OCI-LY7 (cell line): ENCODE measurements at regions of chr15 and their contacts with region 1.

Region 1: GRCh38 chr15:65304389-65305144 is at the start of gene RNU5B-1:
- DNase-seq: peak; percentile 96
- H3K4me3 ChIP-seq: peak within 1 kb of the TSS; percentile 69
- H3K27ac ChIP-seq: peak within 1 kb of the TSS; percentile 91
- H3K4me1 ChIP-seq: peaks cover 24% of the 10 kb centered on the region
- CTCF ChIP-seq: peak; percentile 99
- total RNA-seq, gene RNU5B-1: not detected in 2 replicates

Region 2: GRCh38 chr15:65133548-65134200 is 170.9 kb before region 1 on chr15 and contains the start of gene PDCD7:
- CTCF ChIA-PET with region 1: no interaction called
- POLR2A ChIA-PET with region 1: interaction called, 3 read pairs
- intact Hi-C with region 1: loop called (anchors 1 kb)
- DNase-seq: peak; percentile 95
- H3K4me3 ChIP-seq: peak within 1 kb of the TSS; percentile 87
- H3K27ac ChIP-seq: peak within 1 kb of the TSS; percentile 64
- H3K4me1 ChIP-seq: peaks cover 13% of the 10 kb centered on the region
- CTCF ChIP-seq: no peak
- total RNA-seq, gene PDCD7: 27.2 and 34.6 TPM in 2 replicates

Region 3: GRCh38 chr15:65184868-65185738 is 119.5 kb before region 1 on chr15 and contains the start of gene CLPX:
- CTCF ChIA-PET with region 1: no interaction called
- POLR2A ChIA-PET with region 1: interaction called, 7 read pairs
- intact Hi-C with region 1: loop called (anchors 1 kb)
- DNase-seq: peak; percentile 92
- H3K4me3 ChIP-seq: peak within 1 kb of the TSS; percentile 94
- H3K27ac ChIP-seq: peak within 1 kb of the TSS; percentile 65
- H3K4me1 ChIP-seq: peaks cover 27% of the 10 kb centered on the region
- CTCF ChIP-seq: no peak
- total RNA-seq, gene CLPX: 26.0 and 34.0 TPM in 2 replicates

Region 4: GRCh38 chr15:65292938-65293518 is 11.5 kb before region 1 on chr15:
- CTCF ChIA-PET with region 1: no interaction called
- POLR2A ChIA-PET with region 1: interaction called, 10 read pairs
- intact Hi-C with region 1: loop called (anchors 1 kb)
- DNase-seq: no peak
- H3K4me3 ChIP-seq: no peak overlapping the region
- H3K27ac ChIP-seq: no peak overlapping the region
- H3K4me1 ChIP-seq: peaks cover 37% of the 10 kb centered on the region
- CTCF ChIP-seq: no peak

Region 5: GRCh38 chr15:65318870-65319356 is 14.3 kb after region 1 on chr15:
- CTCF ChIA-PET with region 1: no interaction called
- POLR2A ChIA-PET with region 1: interaction called, 12 read pairs
- intact Hi-C with region 1: no loop called
- DNase-seq: peak; percentile 75
- H3K4me3 ChIP-seq: no peak overlapping the region
- H3K27ac ChIP-seq: no peak overlapping the region
- H3K4me1 ChIP-seq: no peaks in the 10 kb centered on the region
- CTCF ChIP-seq: peak; percentile 90

Region 6: DNA sequence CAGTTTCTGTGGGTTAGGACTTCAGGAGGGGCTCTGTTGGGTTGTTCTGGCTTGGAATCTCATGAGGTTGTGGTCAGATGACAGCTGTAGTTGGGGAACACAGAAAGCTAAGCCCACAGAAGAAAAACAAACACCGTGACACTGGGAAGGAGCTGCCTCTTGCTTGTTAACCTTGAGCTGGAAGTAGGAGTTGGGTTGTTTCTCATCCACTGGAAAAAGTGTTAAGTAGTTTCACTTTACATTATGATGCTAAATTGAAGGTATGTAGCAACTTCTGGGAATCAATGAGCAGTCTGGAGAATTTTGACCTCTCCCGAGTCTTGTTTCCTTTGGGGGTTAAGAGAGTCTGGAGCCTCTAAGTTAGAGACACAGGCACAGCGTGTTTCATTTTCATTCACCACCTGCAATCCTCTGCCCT is 246.1 kb after region 1 on chr15:
- CTCF ChIA-PET with region 1: no interaction called
- POLR2A ChIA-PET with region 1: no interaction called
- intact Hi-C with region 1: no loop called
- DNase-seq: no peak
- H3K4me3 ChIP-seq: no peak overlapping the region
- H3K27ac ChIP-seq: no peak overlapping the region
- H3K4me1 ChIP-seq: no peaks in the 10 kb centered on the region
- CTCF ChIP-seq: no peak